Activated CD4-positive, alpha-beta memory T cell treated with anti-CD3 and anti-CD28 coated beads, Interleukin-2, amount 10 ng/mL, durations not matched to agents 7 days and 5 days (primary cell): ENCODE measurements at regions of chr7 and their contacts with region 1.

Region 1: GRCh38 chr7:65006094-65006992 is at the start of gene ERV3-1:
- DNase-seq: peak; percentile 94
- H3K4me3 Mint-ChIP-seq: peak within 1 kb of the TSS; percentile 91
- H3K27ac Mint-ChIP-seq: peak within 1 kb of the TSS; percentile 72
- H3K4me1 Mint-ChIP-seq: peaks cover 29% of the 10 kb centered on the region
- H3K27me3 Mint-ChIP-seq: no peaks in the 10 kb centered on the region
- total RNA-seq, gene ERV3-1: 9.6 to 14.4 TPM

Region 2: DNA sequence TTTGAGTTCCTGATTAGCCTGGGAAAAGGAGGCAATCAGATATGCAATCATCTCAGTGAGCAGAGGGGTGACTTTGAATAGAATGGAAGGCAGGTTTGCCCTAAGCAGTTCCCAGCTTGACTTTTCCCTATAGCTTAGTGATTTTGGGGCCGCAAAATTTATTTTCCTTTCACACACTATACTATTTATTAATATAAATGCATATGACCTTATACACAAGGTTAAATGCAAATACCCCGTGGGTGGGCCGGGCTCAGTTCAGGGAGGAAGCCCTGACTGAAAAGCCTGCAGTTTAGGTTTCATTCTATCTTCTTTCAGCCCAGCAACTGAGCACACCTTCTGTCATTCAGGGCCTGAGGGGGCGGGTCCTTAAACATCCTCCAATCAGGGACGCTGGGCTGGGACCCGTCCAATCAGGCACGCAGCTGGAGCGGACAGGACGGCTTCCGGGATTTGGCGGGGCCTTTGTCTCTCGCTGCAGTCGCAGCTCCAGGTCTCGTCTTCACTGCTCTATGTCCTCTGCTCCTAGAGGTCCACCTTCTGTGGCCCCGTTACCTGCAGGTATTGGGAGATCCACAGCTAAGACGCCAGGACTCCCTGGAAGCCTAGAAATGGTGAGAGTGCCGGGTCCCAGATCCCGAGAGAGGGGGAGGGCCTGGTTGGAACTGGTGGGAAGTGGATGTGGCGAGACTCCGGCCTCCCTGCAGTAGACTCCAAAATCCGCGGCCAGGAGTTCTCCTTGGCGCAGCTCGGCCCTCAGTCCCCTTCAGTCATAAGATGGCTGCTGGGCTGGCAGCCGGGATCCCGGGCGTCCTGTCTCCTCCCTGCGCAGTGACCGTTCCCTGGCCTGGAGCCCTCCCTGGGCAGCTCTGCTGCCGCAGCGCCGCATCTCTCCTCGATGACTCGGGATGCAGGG is 103.3 kb before region 1 on chr7 and contains the start of gene ZNF273:
- CTCF ChIA-PET with region 1: no interaction called
- POLR2A ChIA-PET with region 1: interaction called, 23 read pairs
- DNase-seq: peak; percentile 94
- H3K4me3 Mint-ChIP-seq: peak within 1 kb of the TSS; percentile 94
- H3K27ac Mint-ChIP-seq: peak within 1 kb of the TSS; percentile 92
- H3K4me1 Mint-ChIP-seq: peaks cover 46% of the 10 kb centered on the region
- H3K27me3 Mint-ChIP-seq: no peaks in the 10 kb centered on the region
- total RNA-seq, gene ZNF273: 8.4 to 10.5 TPM

Region 3: DNA sequence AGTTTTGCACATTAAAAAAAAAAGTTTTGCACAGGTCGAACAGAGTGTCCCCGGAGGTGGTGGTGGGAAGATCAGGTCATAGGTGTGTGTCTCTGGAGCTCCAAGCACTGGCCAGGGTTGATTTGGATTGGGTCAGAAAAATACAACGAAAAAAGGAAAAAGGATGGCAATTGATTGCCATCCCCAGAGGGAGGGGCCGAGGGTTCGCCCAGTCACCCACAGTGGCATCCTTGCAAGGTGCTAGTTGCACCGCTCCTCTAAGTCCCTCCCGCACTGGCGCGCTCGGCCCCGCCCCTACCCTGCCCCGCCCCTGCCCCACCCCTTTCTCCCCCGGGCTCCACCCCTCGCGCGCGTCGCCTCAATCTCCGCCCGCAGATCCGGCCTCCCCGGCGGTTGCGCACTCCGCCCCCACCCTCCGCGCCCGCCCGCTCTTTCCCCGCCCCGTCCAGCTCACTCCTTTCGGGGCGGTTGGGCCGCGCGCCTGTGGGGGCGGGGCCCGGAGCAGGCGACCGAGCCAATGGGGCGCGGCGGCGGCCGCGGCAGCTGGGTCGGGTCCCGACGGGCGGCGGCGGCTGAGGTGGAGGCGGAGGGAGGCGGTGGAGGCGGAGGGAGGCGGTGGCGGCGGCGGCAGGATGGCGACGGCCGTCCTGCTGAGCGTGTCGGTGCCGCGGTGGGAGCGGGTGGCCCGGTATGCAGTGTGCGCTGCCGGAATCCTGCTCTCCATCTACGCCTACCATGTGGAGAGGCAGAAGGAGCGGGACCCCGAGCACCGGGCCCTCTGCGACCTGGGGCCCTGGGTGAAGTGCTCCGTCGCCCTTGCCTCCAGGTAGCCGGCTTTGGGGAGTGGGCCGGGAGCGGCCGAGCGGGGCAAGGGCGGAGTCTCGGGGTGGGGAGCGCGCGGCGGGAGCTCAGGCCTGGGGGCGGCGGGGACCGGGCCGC is 31.7 kb after region 1 on chr7:
- CTCF ChIA-PET with region 1: interaction called, 7 read pairs
- POLR2A ChIA-PET with region 1: interaction called, 28 read pairs
- DNase-seq: peak; percentile 94
- H3K4me3 Mint-ChIP-seq: peak overlapping the region; percentile 75
- H3K27ac Mint-ChIP-seq: peak overlapping the region; percentile 56
- H3K4me1 Mint-ChIP-seq: peaks cover 16% of the 10 kb centered on the region
- H3K27me3 Mint-ChIP-seq: no peaks in the 10 kb centered on the region

Region 4: DNA sequence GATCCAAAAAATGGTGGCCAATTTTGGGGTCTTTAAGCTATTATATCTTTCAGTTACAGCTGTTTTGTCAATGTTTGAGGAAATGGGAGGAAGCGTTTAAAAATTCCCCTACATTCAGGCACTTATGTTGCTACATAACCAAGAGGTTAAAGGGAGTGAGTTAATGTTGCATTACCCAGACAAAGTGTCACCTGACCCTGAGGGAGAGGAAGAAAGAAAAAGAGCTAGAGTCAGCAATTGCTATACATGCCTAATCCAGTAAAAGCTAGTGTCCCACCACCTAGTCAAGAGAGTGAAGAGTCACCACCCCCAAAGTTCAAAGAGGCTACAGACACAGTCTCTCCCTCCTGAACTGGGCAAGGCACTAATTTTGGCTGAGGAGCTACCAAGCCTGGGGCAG is 297.8 kb after region 1 on chr7:
- CTCF ChIA-PET with region 1: no interaction called
- POLR2A ChIA-PET with region 1: no interaction called
- DNase-seq: no peak
- H3K4me3 Mint-ChIP-seq: no peak overlapping the region
- H3K27ac Mint-ChIP-seq: no peak overlapping the region
- H3K4me1 Mint-ChIP-seq: no peaks in the 10 kb centered on the region
- H3K27me3 Mint-ChIP-seq: no peaks in the 10 kb centered on the region

Region 5: DNA sequence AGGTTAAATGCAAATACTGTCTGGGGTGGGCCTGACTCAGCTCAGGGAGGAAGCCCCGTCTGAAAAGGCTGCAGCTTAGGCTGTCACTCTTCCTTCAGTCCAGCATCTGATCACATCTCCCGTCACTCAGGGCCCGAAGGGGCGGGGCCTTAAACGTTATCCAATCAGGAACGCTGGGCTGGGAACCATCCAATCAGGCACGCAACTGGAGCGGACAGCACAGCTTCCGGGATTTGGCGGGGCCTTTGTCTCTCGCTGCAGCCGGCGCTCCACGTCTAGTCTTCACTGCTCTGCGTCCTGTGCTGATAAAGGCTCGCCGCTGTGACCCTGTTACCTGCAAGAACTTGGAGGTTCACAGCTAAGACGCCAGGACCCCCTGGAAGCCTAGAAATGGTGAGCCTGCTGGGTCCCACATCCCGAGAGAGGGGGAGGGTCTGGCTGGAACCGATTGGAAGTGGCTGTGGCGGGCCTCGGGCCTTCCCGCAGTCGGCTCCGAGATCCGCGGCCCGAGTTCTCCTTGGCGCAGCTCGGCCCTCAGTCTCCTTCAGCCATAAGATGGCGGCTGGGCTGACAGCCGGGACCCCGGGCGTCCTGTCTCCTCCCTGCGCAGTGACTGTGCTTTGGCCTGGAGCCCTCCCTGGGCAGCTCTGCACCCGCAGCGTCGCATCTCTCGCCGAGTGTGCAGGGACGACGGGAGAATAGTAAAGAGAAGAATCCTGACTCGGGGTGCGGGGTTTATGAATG is 367.4 kb after region 1 on chr7 and contains the start of gene ZNF92:
- CTCF ChIA-PET with region 1: interaction called, 3 read pairs
- POLR2A ChIA-PET with region 1: interaction called, 13 read pairs
- DNase-seq: peak; percentile 98
- H3K4me3 Mint-ChIP-seq: peak within 1 kb of the TSS; percentile 87
- H3K27ac Mint-ChIP-seq: peak within 1 kb of the TSS; percentile 92
- H3K4me1 Mint-ChIP-seq: peaks cover 41% of the 10 kb centered on the region
- H3K27me3 Mint-ChIP-seq: no peaks in the 10 kb centered on the region
- total RNA-seq, gene ZNF92: 19.7 to 21.6 TPM